HEK293 (cell line): ENCODE measurements at regions of chr1 and their contacts with region 1.

Region 1: DNA sequence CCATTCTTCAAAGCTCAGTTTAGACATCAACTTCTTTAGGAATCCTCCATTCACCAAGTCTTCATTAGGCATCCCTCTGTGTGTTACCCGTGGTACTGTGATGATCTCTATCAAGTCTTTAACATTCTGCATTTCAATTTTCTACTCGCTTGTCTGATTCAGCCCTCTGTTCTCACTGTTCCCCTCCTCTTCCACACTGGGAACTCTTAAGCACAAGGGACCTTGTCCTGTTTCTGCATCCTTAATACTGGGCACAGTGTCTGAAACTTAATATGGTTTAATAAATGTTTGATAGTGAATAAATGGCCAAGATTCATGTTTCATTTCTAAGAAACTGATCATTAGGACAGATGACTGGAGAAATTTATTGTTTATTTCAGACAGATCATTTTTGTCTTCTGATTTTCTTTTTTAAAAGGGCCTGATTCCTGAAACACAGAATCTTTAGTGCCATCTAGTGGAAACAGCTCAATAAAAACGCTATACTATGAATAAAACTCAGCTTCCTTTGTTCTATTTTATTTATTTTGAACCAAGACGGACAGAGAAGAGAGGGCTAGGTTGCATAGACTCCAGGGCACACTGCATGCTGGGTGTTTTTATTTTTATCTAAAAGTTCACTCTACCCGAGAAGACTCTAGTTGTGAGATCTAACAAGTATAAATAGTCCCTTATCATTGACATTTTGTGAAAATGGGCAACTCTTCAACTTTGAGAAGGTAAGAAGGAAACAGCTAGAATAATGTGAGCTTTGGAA is 7.0 kb upstream of the TRIM45 start:
- H3K4me3 ChIP-seq: no peak overlapping the region
- H3K27ac ChIP-seq: no peak overlapping the region
- H3K4me1 ChIP-seq: no peaks in the 10 kb centered on the region
- CTCF ChIP-seq: no peak

Region 2: DNA sequence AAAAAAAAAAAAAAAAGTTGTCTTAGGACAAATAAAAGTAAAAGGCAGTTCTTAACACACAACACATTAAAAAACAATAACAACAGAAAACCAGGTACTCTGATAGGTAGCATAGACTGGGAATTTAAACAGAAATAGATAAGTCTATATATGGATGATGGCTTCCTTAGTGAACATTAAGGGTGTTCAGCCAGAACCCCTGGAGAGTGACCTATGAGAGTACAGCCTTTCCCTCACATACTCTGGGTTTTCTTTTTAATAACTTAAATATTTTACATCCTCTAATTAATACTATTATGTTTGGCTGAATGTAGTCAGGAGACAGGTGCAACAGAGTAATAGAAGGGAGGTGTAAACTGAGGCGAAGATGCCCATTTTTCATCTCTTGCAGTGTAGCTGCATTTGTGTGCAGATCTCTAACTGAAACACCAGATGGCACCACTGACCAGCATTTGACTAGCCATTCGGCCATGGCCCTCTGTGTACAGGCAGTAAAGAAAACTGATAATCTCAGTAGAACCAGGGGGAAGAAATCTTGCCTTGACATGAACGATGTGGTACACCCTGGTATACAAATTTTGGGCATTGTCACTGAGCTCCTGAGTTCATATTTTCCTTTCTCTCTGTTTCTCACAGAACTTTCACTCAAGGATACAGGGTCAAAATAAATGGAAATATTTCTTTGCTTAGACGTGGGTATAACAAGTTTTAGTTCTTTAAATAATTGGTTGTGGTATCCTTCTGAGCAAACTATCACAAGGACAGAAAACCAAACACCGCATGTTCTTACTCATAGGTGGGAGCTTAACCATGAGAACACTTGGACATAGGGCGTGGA is 60.7 kb before region 1 on chr1:
- CTCF ChIA-PET with region 1: interaction called, 15 read pairs
- POLR2A ChIA-PET with region 1: no interaction called
- H3K4me3 ChIP-seq: no peak overlapping the region
- H3K27ac ChIP-seq: no peak overlapping the region
- H3K4me1 ChIP-seq: no peaks in the 10 kb centered on the region
- CTCF ChIP-seq: peak; percentile 72

Region 3: DNA sequence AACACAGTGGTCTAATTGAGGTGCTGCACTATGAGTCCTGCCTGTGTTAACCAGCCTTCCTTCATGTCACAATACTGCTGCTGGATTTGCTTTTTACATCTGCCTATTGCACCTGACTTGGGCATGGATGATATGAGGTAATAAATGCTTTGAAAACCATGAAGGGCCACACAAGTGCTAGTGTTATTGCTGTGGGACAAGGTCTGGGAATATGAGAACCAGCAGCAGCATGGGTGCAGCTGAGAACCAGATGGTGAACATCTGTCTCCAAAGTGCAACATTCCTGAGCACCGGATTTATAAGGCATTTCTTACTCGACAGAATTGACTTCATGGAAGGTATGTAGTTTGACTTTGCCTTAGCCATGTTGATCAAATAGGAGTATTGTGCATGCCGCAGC is 23.5 kb before region 1 on chr1:
- CTCF ChIA-PET with region 1: no interaction called
- POLR2A ChIA-PET with region 1: no interaction called
- H3K4me3 ChIP-seq: no peak overlapping the region
- H3K27ac ChIP-seq: no peak overlapping the region
- H3K4me1 ChIP-seq: no peaks in the 10 kb centered on the region
- CTCF ChIP-seq: no peak

Region 4: GRCh38 chr1:117146570-117147346 is 18.3 kb after region 1 on chr1:
- CTCF ChIA-PET with region 1: interaction called, 18 read pairs
- POLR2A ChIA-PET with region 1: no interaction called
- H3K4me3 ChIP-seq: no peak overlapping the region
- H3K27ac ChIP-seq: no peak overlapping the region
- H3K4me1 ChIP-seq: peaks cover 10% of the 10 kb centered on the region
- CTCF ChIP-seq: no peak